Activated B cell treated with CpG ODN at 0.5 μM for 24 hours (primary cell): ENCODE measurements at regions of chr9 and their contacts with region 1.

Region 1: GRCh38 chr9:68560071-68560844 is 19.6 kb upstream of the TMEM252 start:
- DNase-seq: peak; percentile 36
- ATAC-seq: peak; percentile 85
- H3K4me3 Mint-ChIP-seq: peak overlapping the region; percentile 53
- H3K27ac Mint-ChIP-seq: no peak overlapping the region
- H3K4me1 Mint-ChIP-seq: peaks cover 18% of the 10 kb centered on the region
- H3K27me3 Mint-ChIP-seq: peaks cover 7% of the 10 kb centered on the region
- CTCF ChIP-seq: no peak

Region 2: GRCh38 chr9:68507130-68507805 is 53.0 kb before region 1 on chr9:
- CTCF ChIA-PET with region 1: interaction called, 26 read pairs
- POLR2A ChIA-PET with region 1: no interaction called
- intact Hi-C with region 1: loop called (anchors 1 kb)
- DNase-seq: no peak
- ATAC-seq: no peak
- H3K4me3 Mint-ChIP-seq: no peak overlapping the region
- H3K27ac Mint-ChIP-seq: no peak overlapping the region
- H3K4me1 Mint-ChIP-seq: peaks cover 12% of the 10 kb centered on the region
- H3K27me3 Mint-ChIP-seq: no peaks in the 10 kb centered on the region
- CTCF ChIP-seq: no peak

Region 3: GRCh38 chr9:68540712-68541535 is 19.3 kb before region 1 on chr9 and contains the start of gene TMEM252:
- CTCF ChIA-PET with region 1: interaction called, 10 read pairs
- POLR2A ChIA-PET with region 1: no interaction called
- intact Hi-C with region 1: loop called (anchors 1 kb)
- DNase-seq: no peak
- ATAC-seq: no peak
- H3K4me3 Mint-ChIP-seq: no peak within 1 kb of the TSS
- H3K27ac Mint-ChIP-seq: no peak within 1 kb of the TSS
- H3K4me1 Mint-ChIP-seq: peaks cover 19% of the 10 kb centered on the region
- H3K27me3 Mint-ChIP-seq: no peaks in the 10 kb centered on the region
- CTCF ChIP-seq: no peak
- total RNA-seq, gene TMEM252: not detected in 2 replicates

Region 4: GRCh38 chr9:68546596-68547390 is 13.5 kb before region 1 on chr9:
- CTCF ChIA-PET with region 1: interaction called, 10 read pairs
- POLR2A ChIA-PET with region 1: interaction called, 3 read pairs
- intact Hi-C with region 1: loop called (anchors 1 kb)
- DNase-seq: peak; percentile 20
- ATAC-seq: peak; percentile 83
- H3K4me3 Mint-ChIP-seq: peak overlapping the region; percentile 66
- H3K27ac Mint-ChIP-seq: peak overlapping the region; percentile 84
- H3K4me1 Mint-ChIP-seq: peaks cover 42% of the 10 kb centered on the region
- H3K27me3 Mint-ChIP-seq: no peaks in the 10 kb centered on the region
- CTCF ChIP-seq: no peak

Region 5: GRCh38 chr9:68577774-68578591 is 17.7 kb after region 1 on chr9:
- CTCF ChIA-PET with region 1: interaction called, 11 read pairs
- POLR2A ChIA-PET with region 1: no interaction called
- intact Hi-C with region 1: no loop called
- DNase-seq: no peak
- ATAC-seq: peak; percentile 88
- H3K4me3 Mint-ChIP-seq: peak overlapping the region; percentile 39
- H3K27ac Mint-ChIP-seq: no peak overlapping the region
- H3K4me1 Mint-ChIP-seq: peaks cover 28% of the 10 kb centered on the region
- H3K27me3 Mint-ChIP-seq: no peaks in the 10 kb centered on the region
- CTCF ChIP-seq: no peak